Right ventricle myocardium inferior (tissue), 1 donor: ENCODE measurements at regions of chr2 and their contacts with region 1.

Region 1: DNA sequence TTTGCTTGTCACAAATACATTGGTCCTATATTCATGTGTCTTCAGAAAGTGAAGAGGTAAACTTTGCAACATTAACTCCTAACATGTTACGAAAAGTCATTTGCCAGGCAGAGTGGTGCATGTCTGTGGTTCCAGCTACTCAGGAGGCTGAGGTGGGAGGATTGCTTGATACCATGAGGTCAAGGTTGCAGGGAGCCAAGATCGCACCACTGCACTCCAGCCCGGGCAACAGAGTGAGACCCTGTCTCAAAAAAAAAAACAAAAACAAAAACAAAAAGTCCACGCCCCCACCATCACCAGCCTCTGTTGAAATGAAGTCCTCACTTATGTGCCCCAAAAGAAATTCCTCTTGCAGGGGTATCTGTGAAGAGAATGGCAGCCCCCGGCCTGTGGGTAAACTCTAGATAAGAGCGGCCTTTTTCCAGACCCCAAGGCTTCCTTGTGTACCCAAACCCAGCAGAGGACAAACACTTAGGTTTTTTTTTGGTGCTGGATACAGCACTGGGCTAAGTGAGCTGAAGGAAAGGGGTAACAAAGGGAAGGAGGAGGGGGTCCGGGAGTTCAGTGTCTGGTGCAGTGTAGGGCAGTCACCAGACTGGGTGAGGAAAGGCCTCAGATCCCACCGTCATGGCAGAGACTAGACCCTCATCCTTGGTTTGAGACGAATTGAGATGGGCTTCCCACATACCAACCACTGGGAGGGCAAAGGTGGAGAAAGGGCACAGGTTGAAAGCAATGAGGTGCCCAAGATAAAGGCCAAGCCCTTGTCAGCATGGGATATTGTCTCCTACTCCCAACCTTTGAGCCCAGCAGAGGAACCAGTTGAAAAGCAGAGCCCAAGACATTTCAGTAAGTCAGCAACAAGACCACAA is 19.2 kb downstream of the HSPD1 start:
- DNase-seq: no peak
- ATAC-seq: no peak

Region 2: GRCh38 chr2:197391220-197391717 is 89.1 kb before region 1 on chr2:
- intact Hi-C with region 1: loop called (anchors 5 kb)
- DNase-seq: no peak
- ATAC-seq: no peak

Region 3: DNA sequence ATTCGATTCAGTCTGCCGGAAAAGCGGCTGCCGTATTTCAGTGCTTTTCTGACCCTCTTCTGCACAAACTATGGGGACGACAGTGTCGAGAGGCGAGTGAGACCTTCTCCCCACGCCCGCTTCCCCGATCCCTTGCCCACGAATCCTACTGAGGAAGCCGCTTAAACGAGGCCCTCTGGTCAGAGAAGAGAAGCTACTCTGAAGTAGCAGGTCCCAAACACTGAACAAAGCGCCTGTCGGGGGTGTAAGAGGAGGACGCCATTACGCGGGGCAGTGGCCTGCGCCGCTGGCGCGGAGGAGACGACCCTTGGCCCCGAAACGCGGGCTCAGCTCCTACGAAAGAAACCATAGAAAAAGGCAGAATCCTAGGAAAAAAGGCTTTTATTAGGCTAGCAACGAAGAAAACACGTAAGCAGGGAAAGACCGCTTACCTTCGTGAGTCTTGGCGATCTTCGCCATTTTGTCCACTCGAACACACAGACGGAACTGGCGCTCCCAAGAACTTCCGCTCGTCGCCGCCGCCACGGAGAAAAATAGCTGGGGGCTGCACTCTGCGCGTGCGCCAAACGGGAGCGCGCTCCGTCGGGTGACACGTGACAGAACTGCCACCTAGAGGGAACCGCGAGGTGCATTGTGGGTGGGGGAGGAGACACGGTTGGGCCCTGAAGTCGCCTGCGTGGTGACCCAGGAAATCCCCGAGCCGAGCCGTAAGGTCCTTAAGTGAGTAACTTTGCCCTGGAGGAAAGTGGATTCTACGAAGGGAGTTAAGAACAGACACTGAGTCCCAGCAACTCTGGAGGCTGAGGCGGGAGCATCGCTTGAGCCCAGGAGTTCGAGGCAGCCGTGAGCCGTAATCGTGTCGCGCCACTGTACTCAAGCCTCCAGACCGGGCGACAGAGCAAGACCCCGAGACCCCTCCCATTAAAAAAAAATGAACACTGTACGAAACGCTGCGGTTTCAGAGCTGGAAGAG is 45.6 kb before region 1 on chr2 and contains the start of gene SF3B1:
- intact Hi-C with region 1: no loop called
- DNase-seq: peak; percentile 99
- ATAC-seq: peak; percentile 99
- total RNA-seq, gene SF3B1: 126 TPM